Left lung (tissue), 14 donors: ENCODE measurements at regions of chr4 and their contacts with region 1.

Region 1: GRCh38 chr4:153785910-153786721 is 2.8 kb downstream of the SFRP2 start:
- DNase-seq: no peak
- ATAC-seq: peak; percentile 34
- H3K4me3 ChIP-seq: no peak overlapping the region
- H3K27ac ChIP-seq: no peak overlapping the region
- H3K4me1 ChIP-seq: peaks cover 6 to 25% of the 10 kb centered on the region in 2 donors
- H3K27me3 ChIP-seq: peaks cover 51 to 97% of the 10 kb centered on the region in 2 donors
- CTCF ChIP-seq: no peak

Region 2: GRCh38 chr4:154317201-154317999 is 531.3 kb after region 1 on chr4:
- intact Hi-C with region 1: loop called in 1 of 2 experiments (anchors 5 kb)
- DNase-seq: no peak
- ATAC-seq: no peak
- H3K4me3 ChIP-seq: no peak overlapping the region
- H3K27ac ChIP-seq: no peak overlapping the region
- H3K4me1 ChIP-seq: no peaks in the 10 kb centered on the region
- H3K27me3 ChIP-seq: no peaks in the 10 kb centered on the region
- CTCF ChIP-seq: no peak